ENCODE measurements at regions of chr15 and their contacts with region 1.

Region 1: GRCh38 chr15:40398413-40398873 is 7.2 kb upstream of the IVD start:
- DNase-seq: peak; percentile 55
- H3K4me3 Mint-ChIP-seq: no peak overlapping the region
- H3K27ac Mint-ChIP-seq: no peak overlapping the region
- H3K4me1 Mint-ChIP-seq: peaks cover 24% of the 10 kb centered on the region
- H3K27me3 Mint-ChIP-seq: no peaks in the 10 kb centered on the region

Region 2: GRCh38 chr15:40382580-40383456 is 15.6 kb before region 1 on chr15 and contains the start of gene KNSTRN:
- CTCF ChIA-PET with region 1: interaction called, 3 read pairs
- POLR2A ChIA-PET with region 1: interaction called, 4 read pairs
- intact Hi-C with region 1: loop called (anchors 2 kb)
- DNase-seq: peak; percentile 95
- H3K4me3 Mint-ChIP-seq: peak within 1 kb of the TSS; percentile 87
- H3K27ac Mint-ChIP-seq: peak within 1 kb of the TSS; percentile 34
- H3K4me1 Mint-ChIP-seq: peaks cover 14% of the 10 kb centered on the region
- H3K27me3 Mint-ChIP-seq: no peaks in the 10 kb centered on the region
- total RNA-seq, gene KNSTRN: 59.8 to 61.5 TPM

Region 3: DNA sequence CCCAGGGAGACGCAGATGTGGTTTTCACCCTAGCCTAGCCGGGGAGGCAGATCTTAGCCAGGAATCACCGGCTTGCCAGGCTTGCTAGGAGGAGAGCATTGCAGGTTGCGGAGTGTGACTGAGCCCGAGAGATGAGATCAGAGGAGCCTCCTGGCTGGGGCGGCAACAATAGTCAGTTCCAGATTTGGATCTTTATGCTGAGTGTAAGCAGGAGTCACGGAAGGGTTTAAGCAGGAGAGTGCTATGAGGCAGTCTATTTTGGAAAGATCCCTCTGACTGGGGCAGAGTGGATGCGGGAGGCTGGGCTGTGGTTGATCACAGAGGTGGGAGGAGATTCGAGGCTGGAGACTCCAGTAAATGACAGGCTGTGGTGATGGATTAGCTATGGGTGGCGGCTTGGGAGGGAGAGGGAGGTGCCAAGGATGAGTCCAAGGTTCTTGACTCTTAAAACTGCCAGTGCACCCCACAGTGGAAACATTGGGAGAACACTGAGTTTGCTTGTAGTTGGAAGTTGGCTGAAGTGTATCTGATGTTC is 31.9 kb after region 1 on chr15:
- CTCF ChIA-PET with region 1: no interaction called
- POLR2A ChIA-PET with region 1: no interaction called
- intact Hi-C with region 1: no loop called
- DNase-seq: no peak
- H3K4me3 Mint-ChIP-seq: no peak overlapping the region
- H3K27ac Mint-ChIP-seq: no peak overlapping the region
- H3K4me1 Mint-ChIP-seq: no peaks in the 10 kb centered on the region
- H3K27me3 Mint-ChIP-seq: no peaks in the 10 kb centered on the region

Region 4: GRCh38 chr15:40782580-40783227 is 384.3 kb after region 1 on chr15:
- CTCF ChIA-PET with region 1: no interaction called
- POLR2A ChIA-PET with region 1: no interaction called
- intact Hi-C with region 1: no loop called
- DNase-seq: peak; percentile 87
- H3K4me3 Mint-ChIP-seq: no peak overlapping the region
- H3K27ac Mint-ChIP-seq: no peak overlapping the region
- H3K4me1 Mint-ChIP-seq: peaks cover 22% of the 10 kb centered on the region
- H3K27me3 Mint-ChIP-seq: no peaks in the 10 kb centered on the region

Measured in activated CD4-positive, alpha-beta memory T cell treated with anti-CD3 and anti-CD28 coated beads for 36 hours (primary cell).